ENCODE measurements at regions of chr13 and their contacts with region 1.

Region 1: GRCh38 chr13:44917589-44918325 is 71.5 kb downstream of the NUFIP1 start:
- DNase-seq: peak; percentile 97
- H3K4me3 Mint-ChIP-seq: no peak overlapping the region
- H3K27ac Mint-ChIP-seq: no peak overlapping the region
- H3K4me1 Mint-ChIP-seq: no peaks in the 10 kb centered on the region
- H3K27me3 Mint-ChIP-seq: no peaks in the 10 kb centered on the region

Region 2: DNA sequence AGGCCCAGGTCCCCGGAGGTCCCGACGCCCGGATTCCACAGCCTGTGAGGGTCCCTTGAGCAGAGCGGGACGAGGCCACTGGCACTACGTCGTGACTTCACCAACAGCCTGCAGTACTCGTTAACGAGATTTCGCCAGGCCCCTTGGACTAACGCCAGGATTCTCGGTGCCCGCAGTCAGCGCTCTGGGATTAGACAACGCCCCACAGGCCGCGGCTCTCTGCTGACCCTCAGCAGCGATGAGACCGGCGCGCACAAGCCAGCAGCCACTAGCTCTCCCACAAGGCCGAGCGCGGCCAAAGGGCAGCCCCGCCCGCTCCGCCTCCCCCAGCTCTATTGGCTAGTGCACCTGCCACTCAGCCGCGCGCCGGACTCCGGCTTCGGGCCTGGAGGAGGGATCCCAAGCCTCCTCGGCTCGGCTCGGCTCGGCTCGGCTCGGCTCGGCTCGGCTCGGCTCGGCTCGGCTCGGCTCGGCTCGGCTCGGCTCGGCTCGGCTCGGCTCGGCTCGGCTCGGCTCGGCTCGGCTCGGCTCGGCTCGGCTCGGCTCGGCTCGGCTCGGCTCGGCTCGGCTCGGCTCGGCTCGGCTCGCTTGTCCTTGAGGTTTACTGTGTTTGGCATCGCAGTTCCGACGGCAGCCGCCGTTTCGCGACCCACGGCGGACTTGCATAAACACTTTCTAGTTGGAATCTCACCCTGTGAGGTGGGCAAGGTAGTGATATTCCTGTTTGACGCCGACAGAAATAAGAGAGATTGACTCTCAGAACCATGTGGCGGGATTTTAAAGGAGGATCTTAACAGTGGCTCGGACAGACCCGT is 775.8 kb before region 1 on chr13:
- CTCF ChIA-PET with region 1: no interaction called
- POLR2A ChIA-PET with region 1: no interaction called
- intact Hi-C with region 1: loop called (anchors 1 kb)
- DNase-seq: peak; percentile 96
- H3K4me3 Mint-ChIP-seq: peak overlapping the region; percentile 85
- H3K27ac Mint-ChIP-seq: peak overlapping the region; percentile 75
- H3K4me1 Mint-ChIP-seq: peaks cover 12% of the 10 kb centered on the region
- H3K27me3 Mint-ChIP-seq: peaks cover 2% of the 10 kb centered on the region

Region 3: GRCh38 chr13:44577236-44578066 is 340.3 kb before region 1 on chr13:
- CTCF ChIA-PET with region 1: no interaction called
- POLR2A ChIA-PET with region 1: no interaction called
- intact Hi-C with region 1: loop called (anchors 1 kb)
- DNase-seq: peak; percentile 96
- H3K4me3 Mint-ChIP-seq: peak overlapping the region; percentile 93
- H3K27ac Mint-ChIP-seq: peak overlapping the region; percentile 85
- H3K4me1 Mint-ChIP-seq: peaks cover 39% of the 10 kb centered on the region
- H3K27me3 Mint-ChIP-seq: peaks cover 2% of the 10 kb centered on the region

Region 4: GRCh38 chr13:44815623-44816022 is 102.1 kb before region 1 on chr13:
- CTCF ChIA-PET with region 1: interaction called, 4 read pairs
- POLR2A ChIA-PET with region 1: no interaction called
- intact Hi-C with region 1: loop called (anchors 2 kb)
- DNase-seq: peak; percentile 62
- H3K4me3 Mint-ChIP-seq: no peak overlapping the region
- H3K27ac Mint-ChIP-seq: no peak overlapping the region
- H3K4me1 Mint-ChIP-seq: peaks cover 22% of the 10 kb centered on the region
- H3K27me3 Mint-ChIP-seq: peaks cover 25% of the 10 kb centered on the region

Region 5: GRCh38 chr13:45063261-45063860 is 145.6 kb after region 1 on chr13:
- CTCF ChIA-PET with region 1: no interaction called
- POLR2A ChIA-PET with region 1: no interaction called
- intact Hi-C with region 1: no loop called
- DNase-seq: no peak
- H3K4me3 Mint-ChIP-seq: no peak overlapping the region
- H3K27ac Mint-ChIP-seq: no peak overlapping the region
- H3K4me1 Mint-ChIP-seq: peaks cover 2% of the 10 kb centered on the region
- H3K27me3 Mint-ChIP-seq: peaks cover 21% of the 10 kb centered on the region

Region 6: GRCh38 chr13:45119991-45120864 is 202.5 kb after region 1 on chr13 and contains the start of gene GTF2F2:
- CTCF ChIA-PET with region 1: no interaction called
- POLR2A ChIA-PET with region 1: no interaction called
- intact Hi-C with region 1: loop called (anchors 1 kb)
- DNase-seq: peak; percentile 91
- H3K4me3 Mint-ChIP-seq: no peak within 1 kb of the TSS
- H3K27ac Mint-ChIP-seq: no peak within 1 kb of the TSS
- H3K4me1 Mint-ChIP-seq: peaks cover 8% of the 10 kb centered on the region
- H3K27me3 Mint-ChIP-seq: no peaks in the 10 kb centered on the region
- total RNA-seq, gene GTF2F2: 25.4 to 26.0 TPM

Region 7: GRCh38 chr13:46052319-46053161 is 1134.8 kb after region 1 on chr13 and contains the start of gene ZC3H13:
- CTCF ChIA-PET with region 1: no interaction called
- POLR2A ChIA-PET with region 1: no interaction called
- intact Hi-C with region 1: loop called (anchors 2 kb)
- DNase-seq: peak; percentile 96
- H3K4me3 Mint-ChIP-seq: peak within 1 kb of the TSS; percentile 90
- H3K27ac Mint-ChIP-seq: peak within 1 kb of the TSS; percentile 93
- H3K4me1 Mint-ChIP-seq: peaks cover 28% of the 10 kb centered on the region
- H3K27me3 Mint-ChIP-seq: peaks cover 8% of the 10 kb centered on the region
- total RNA-seq, gene ZC3H13: 37.0 to 47.3 TPM

Measured in activated CD4-positive, alpha-beta memory T cell treated with anti-CD3 and anti-CD28 coated beads for 36 hours (primary cell).